ENCODE measurements at regions of chr11 and their contacts with region 1.

Region 1: GRCh38 chr11:104946907-104947306 is 21.5 kb downstream of the CASP4 start:
- DNase-seq: peak; percentile 16
- H3K4me3 Mint-ChIP-seq: no peak overlapping the region
- H3K27ac Mint-ChIP-seq: no peak overlapping the region
- H3K4me1 Mint-ChIP-seq: peaks cover 5% of the 10 kb centered on the region
- H3K27me3 Mint-ChIP-seq: no peaks in the 10 kb centered on the region

Region 2: GRCh38 chr11:104852811-104853210 is 94.1 kb before region 1 on chr11:
- CTCF ChIA-PET with region 1: no interaction called
- POLR2A ChIA-PET with region 1: no interaction called
- intact Hi-C with region 1: no loop called
- DNase-seq: no peak
- H3K4me3 Mint-ChIP-seq: no peak overlapping the region
- H3K27ac Mint-ChIP-seq: no peak overlapping the region
- H3K4me1 Mint-ChIP-seq: no peaks in the 10 kb centered on the region
- H3K27me3 Mint-ChIP-seq: no peaks in the 10 kb centered on the region

Region 3: GRCh38 chr11:104870910-104871309 is 76.0 kb before region 1 on chr11:
- CTCF ChIA-PET with region 1: no interaction called
- POLR2A ChIA-PET with region 1: no interaction called
- intact Hi-C with region 1: no loop called
- DNase-seq: no peak
- H3K4me3 Mint-ChIP-seq: no peak overlapping the region
- H3K27ac Mint-ChIP-seq: no peak overlapping the region
- H3K4me1 Mint-ChIP-seq: peaks cover 7% of the 10 kb centered on the region
- H3K27me3 Mint-ChIP-seq: no peaks in the 10 kb centered on the region

Region 4: DNA sequence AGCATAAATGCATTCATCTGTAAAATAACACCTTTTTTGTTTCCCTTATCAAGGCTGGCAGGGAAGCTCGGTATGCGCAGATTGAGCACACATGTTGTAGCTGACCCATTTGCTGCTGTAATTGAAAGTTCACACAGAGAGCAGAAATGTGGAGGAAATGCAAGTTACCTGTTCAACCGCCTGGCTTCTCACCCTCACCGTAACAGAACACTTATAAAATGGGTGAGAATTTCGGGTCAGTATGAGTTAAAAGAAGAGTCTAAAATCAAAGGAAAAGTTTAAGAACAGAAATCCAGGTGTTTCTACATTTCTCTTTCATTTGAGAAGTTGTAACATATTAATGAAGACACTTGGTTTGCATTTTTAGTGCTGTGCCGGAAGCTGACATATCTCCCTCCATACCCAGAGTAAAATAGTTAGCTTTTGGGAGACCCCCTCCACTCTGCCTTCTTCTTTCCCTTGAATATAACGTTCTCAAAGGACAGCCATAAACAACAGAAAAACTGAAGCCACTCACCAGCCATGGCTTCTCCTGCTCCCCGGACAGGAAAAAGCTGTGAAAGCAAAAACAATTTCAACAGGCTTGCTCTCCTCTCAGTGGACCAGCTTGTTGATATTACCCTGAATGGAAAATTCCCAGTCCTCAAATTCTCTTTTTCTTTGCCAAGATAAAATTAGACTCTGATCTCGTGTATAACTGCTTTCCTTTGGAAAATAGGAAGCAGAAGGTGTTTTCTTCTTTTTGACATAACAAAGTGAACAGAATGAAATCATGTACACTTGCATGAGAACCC is 48.8 kb before region 1 on chr11 and contains the start of gene CASP12:
- CTCF ChIA-PET with region 1: no interaction called
- POLR2A ChIA-PET with region 1: no interaction called
- intact Hi-C with region 1: no loop called
- DNase-seq: peak; percentile 33
- H3K4me3 Mint-ChIP-seq: peak within 1 kb of the TSS; percentile 74
- H3K27ac Mint-ChIP-seq: peak within 1 kb of the TSS; percentile 81
- H3K4me1 Mint-ChIP-seq: peaks cover 30% of the 10 kb centered on the region
- H3K27me3 Mint-ChIP-seq: no peaks in the 10 kb centered on the region
- total RNA-seq, gene CASP12: not detected

Region 5: DNA sequence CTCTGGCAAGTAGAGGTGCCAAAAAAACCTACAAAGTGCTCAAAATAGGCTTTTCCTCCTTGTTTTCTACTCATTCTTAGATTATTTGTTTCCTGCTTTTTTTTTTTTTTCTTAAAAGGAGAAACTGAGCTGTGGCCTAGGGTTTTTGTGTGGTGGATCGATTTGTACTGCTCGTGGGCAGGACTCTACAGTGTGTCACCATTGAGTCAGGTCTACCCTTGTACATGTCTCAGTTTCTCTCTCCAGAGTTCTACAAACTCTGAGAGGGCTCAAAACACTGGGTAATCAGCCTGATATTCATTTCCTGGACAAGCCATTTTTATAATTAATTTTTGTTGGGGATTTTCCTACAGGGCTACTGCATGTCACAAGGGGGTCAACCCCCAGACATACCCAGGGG is 26.7 kb after region 1 on chr11:
- CTCF ChIA-PET with region 1: no interaction called
- POLR2A ChIA-PET with region 1: no interaction called
- intact Hi-C with region 1: no loop called
- DNase-seq: no peak
- H3K4me3 Mint-ChIP-seq: no peak overlapping the region
- H3K27ac Mint-ChIP-seq: no peak overlapping the region
- H3K4me1 Mint-ChIP-seq: peaks cover 8% of the 10 kb centered on the region
- H3K27me3 Mint-ChIP-seq: no peaks in the 10 kb centered on the region

Region 6: GRCh38 chr11:105000797-105001196 is 53.9 kb after region 1 on chr11:
- CTCF ChIA-PET with region 1: interaction called, 5 read pairs
- POLR2A ChIA-PET with region 1: no interaction called
- intact Hi-C with region 1: loop called (anchors 1 kb)
- DNase-seq: peak; percentile 74
- H3K4me3 Mint-ChIP-seq: no peak overlapping the region
- H3K27ac Mint-ChIP-seq: no peak overlapping the region
- H3K4me1 Mint-ChIP-seq: peaks cover 5% of the 10 kb centered on the region
- H3K27me3 Mint-ChIP-seq: no peaks in the 10 kb centered on the region

Measured in activated CD4-positive, alpha-beta memory T cell treated with anti-CD3 and anti-CD28 coated beads for 36 hours (primary cell).